ENCODE measurements at regions of chr11 and their contacts with region 1.

Region 1: DNA sequence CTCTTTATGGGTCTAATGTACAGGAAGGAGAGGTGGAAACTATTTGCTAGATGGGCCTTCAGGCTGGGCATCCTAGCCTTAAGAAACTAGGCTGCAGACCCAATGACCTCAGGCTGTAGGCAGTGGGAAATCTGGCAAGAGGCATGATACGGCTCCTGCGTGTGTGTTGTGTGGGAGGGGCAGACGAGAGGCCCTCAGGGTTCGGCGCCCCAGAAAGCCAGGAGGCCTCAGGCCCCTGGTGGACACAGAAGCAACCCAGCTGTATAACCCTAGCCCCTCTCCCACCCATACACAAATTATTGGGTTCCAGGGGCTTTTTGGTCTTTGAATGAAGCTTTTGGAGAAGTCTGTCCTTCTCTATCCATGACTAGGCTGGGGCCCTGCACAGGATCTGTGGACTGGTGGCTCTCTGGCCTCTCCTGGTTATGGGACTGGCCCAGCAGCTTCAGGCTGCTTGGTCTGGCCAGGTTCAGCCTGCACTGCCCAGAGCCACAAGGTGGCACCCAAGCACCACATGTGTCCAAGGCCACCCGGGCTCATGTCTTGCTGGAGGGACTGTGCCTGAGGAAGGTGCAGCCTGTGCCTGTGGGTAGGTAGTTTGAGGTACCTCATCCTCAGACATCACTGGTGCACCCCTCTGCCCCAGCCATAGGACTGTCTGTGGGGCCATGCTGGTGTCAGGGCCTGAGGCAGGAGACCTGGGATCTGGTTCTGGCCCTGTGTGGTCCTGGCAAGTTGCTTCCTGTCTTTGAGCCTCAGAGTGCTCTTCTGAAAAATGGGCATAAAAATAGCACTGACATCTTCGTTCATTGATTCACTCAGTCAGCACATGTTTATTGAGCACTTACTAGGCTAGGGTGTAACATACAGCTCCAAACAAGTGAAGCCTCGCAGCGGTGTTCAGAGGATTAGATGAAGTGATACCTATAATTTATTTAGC is 87.5 kb downstream of the RRM1 start:
- DNase-seq: peak; percentile 48
- ATAC-seq: peak; percentile 97
- H3K4me3 ChIP-seq: no peak overlapping the region
- H3K27ac ChIP-seq: no peak overlapping the region
- H3K4me1 ChIP-seq: no peaks in the 10 kb centered on the region
- H3K27me3 ChIP-seq: peaks cover 0 to 26% of the 10 kb centered on the region in 2 experiments; a peak in 2 of 5 replicates
- CTCF ChIP-seq: peak; percentile 94
- EP300 ChIP-seq: no peak
- POLR2A ChIP-seq: no peak
- RAD21 ChIP-seq: peak; percentile 74

Region 2: GRCh38 chr11:4203603-4204360 is 21.7 kb after region 1 on chr11:
- CTCF ChIA-PET with region 1: no interaction called
- POLR2A ChIA-PET with region 1: no interaction called
- in situ Hi-C with region 1: no loop called
- intact Hi-C with region 1: no loop called
- DNase-seq: no peak
- ATAC-seq: peak; percentile 88
- H3K4me3 ChIP-seq: no peak overlapping the region
- H3K27ac ChIP-seq: no peak overlapping the region
- H3K4me1 ChIP-seq: no peaks in the 10 kb centered on the region
- H3K27me3 ChIP-seq: peaks cover 0 to 10% of the 10 kb centered on the region in 2 experiments; a peak in 2 of 5 replicates
- CTCF ChIP-seq: 0 out of 2 replicates have a peak, but pooled peaks have one; percentile 18
- EP300 ChIP-seq: no peak
- POLR2A ChIP-seq: no peak
- RAD21 ChIP-seq: no peak

Region 3: GRCh38 chr11:4539603-4540219 is 357.7 kb after region 1 on chr11:
- CTCF ChIA-PET with region 1: interaction called, 29 read pairs
- POLR2A ChIA-PET with region 1: no interaction called
- in situ Hi-C with region 1: loop called (anchors 5 kb)
- intact Hi-C with region 1: loop called (anchors 1 kb)
- DNase-seq: peak; percentile 18
- ATAC-seq: peak; percentile 84
- H3K4me3 ChIP-seq: no peak overlapping the region
- H3K27ac ChIP-seq: no peak overlapping the region
- H3K4me1 ChIP-seq: no peaks in the 10 kb centered on the region
- H3K27me3 ChIP-seq: no peaks in the 10 kb centered on the region; a peak in 1 of 5 replicates
- CTCF ChIP-seq: peak; percentile 66
- EP300 ChIP-seq: no peak
- POLR2A ChIP-seq: no peak
- RAD21 ChIP-seq: peak; percentile 37; the same call in 1 of the 2 replicates

Measured in HepG2 (cell line).